ENCODE measurements at regions of chr4 and their contacts with region 1.

Region 1: DNA sequence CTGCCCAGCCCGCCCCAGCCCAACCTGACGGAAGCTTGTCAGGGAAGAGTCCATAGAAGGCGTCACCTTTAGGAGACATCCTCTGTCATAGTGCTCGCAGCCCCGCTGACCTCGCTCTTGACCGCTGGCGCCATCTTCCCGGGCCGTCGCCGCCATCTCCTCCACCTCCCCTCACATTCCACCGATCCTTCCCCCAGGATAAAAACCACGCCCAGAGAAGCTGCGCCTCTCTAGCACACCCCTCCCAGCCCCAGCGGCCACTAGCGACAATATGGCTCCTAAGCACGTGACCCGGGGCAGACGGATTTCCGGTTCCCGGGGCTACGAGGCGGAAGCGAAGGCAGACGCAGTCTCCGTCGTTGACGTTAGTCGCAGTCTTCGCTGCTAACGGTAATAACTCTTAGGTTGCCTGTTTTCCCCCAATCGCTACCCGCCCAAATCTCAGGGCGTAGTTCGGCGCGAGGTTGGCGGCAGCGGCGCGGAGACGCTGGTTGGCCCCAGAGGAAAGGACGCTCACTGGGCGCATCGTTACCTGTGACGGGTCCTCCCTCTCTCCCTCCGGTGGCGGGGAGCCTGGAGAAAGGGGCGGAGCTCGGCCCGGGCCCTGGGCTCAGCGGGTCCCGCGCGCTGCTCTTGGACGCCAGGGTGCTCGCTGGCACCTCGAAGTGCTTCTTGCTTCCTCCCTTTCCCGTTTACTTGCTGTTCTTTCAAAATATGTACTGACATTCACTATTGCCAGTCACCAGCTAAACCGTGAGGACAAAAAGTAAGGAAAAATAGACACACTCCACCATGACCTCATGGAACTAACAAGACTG is at the starts of genes RCHY1 and THAP6:
- DNase-seq: peak; percentile 82 to 95 (median 93)
- ATAC-seq: peak; percentile 92
- H3K4me3 ChIP-seq: peak within 1 kb of the TSS; percentile 79
- H3K4me3 Mint-ChIP-seq: peak within 1 kb of the TSS in 1 of 10 donors; percentile 97
- H3K27ac ChIP-seq: peak within 1 kb of the TSS; percentile 98
- H3K27ac Mint-ChIP-seq: peak within 1 kb of the TSS in 7 of 9 donors; percentile 96 to 100 (median 98)
- H3K4me1 ChIP-seq: peaks cover 53 to 56% of the 10 kb centered on the region in 2 donors
- H3K4me1 Mint-ChIP-seq: peaks cover 30 to 63% (median 49%) of the 10 kb centered on the region in 7 donors
- H3K27me3 ChIP-seq: no peaks in the 10 kb centered on the region
- H3K27me3 Mint-ChIP-seq: no peaks in the 10 kb centered on the region
- total RNA-seq, gene RCHY1: 23.0 to 37.8 (median 29.6) TPM
- total RNA-seq, gene THAP6: 18.2 to 43.9 (median 25.1) TPM

Region 2: DNA sequence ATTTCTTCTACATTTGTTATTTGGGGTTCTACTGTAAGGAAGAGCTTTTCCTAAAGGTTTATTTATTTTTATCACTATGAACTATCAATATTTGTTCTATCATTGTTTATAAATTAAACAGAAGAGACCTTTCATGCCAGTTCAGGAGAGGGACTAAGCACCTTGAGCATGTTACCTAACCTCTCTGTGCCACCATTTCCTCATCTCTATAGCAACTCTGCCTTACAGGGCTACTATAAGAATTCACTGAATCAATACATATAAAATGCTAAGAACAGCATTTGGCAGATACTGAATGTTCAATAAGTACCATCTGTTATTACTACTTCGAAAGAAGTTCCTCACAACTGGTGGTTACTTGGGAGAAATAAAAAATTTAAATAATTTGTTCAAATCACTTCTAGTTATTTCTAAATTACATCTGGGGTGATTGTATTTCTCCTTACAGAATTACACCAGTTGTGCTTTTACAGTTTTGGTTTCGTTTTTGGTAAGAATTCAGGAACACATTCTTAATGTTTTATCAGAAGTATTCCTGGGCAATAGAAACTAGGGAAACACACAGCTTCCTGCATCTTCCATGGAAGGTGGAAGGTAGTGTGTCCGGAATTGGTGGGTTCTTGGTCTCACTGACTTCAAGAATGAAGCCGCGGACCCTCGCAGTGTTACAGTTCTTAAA is 1116.5 kb before region 1 on chr4:
- CTCF ChIA-PET with region 1: no interaction called
- POLR2A ChIA-PET with region 1: interaction called, 5 read pairs
- intact Hi-C with region 1: loop called in 1 of 2 experiments (anchors 1 kb)
- DNase-seq: peak in 4 of 9 donors; percentile 10 to 58 (median 38)
- ATAC-seq: peak; percentile 78
- H3K4me3 ChIP-seq: peak overlapping the region; percentile 76
- H3K4me3 Mint-ChIP-seq: peak overlapping the region; percentile 89 to 99 (median 96)
- H3K27ac ChIP-seq: peak overlapping the region; percentile 83
- H3K27ac Mint-ChIP-seq: peak overlapping the region; percentile 92 to 99 (median 97)
- H3K4me1 ChIP-seq: no peaks in the 10 kb centered on the region
- H3K4me1 Mint-ChIP-seq: peaks cover 0 to 19% (median 11%) of the 10 kb centered on the region in 7 donors
- H3K27me3 ChIP-seq: no peaks in the 10 kb centered on the region
- H3K27me3 Mint-ChIP-seq: peaks cover 0 to 5% (median 0%) of the 10 kb centered on the region in 5 donors

Region 3: GRCh38 chr4:75630174-75630936 is 116.0 kb after region 1 on chr4 and contains the start of gene CDKL2:
- CTCF ChIA-PET with region 1: no interaction called
- POLR2A ChIA-PET with region 1: no interaction called
- intact Hi-C with region 1: loop called (anchors 1 to 2 kb)
- DNase-seq: peak; percentile 85 to 93 (median 91)
- ATAC-seq: peak; percentile 100
- H3K4me3 ChIP-seq: peak within 1 kb of the TSS; percentile 74
- H3K4me3 Mint-ChIP-seq: peak within 1 kb of the TSS; percentile 88 to 97 (median 94)
- H3K27ac ChIP-seq: peak within 1 kb of the TSS; percentile 73
- H3K27ac Mint-ChIP-seq: peak within 1 kb of the TSS; percentile 66 to 94 (median 86)
- H3K4me1 ChIP-seq: peaks cover 0 to 7% of the 10 kb centered on the region in 2 donors
- H3K4me1 Mint-ChIP-seq: peaks cover 6 to 18% (median 11%) of the 10 kb centered on the region in 7 donors
- H3K27me3 ChIP-seq: no peaks in the 10 kb centered on the region
- H3K27me3 Mint-ChIP-seq: peaks cover 0 to 12% (median 0%) of the 10 kb centered on the region in 5 donors
- total RNA-seq, gene CDKL2: 0.22 to 1.2 (median 0.34) TPM

Region 4: DNA sequence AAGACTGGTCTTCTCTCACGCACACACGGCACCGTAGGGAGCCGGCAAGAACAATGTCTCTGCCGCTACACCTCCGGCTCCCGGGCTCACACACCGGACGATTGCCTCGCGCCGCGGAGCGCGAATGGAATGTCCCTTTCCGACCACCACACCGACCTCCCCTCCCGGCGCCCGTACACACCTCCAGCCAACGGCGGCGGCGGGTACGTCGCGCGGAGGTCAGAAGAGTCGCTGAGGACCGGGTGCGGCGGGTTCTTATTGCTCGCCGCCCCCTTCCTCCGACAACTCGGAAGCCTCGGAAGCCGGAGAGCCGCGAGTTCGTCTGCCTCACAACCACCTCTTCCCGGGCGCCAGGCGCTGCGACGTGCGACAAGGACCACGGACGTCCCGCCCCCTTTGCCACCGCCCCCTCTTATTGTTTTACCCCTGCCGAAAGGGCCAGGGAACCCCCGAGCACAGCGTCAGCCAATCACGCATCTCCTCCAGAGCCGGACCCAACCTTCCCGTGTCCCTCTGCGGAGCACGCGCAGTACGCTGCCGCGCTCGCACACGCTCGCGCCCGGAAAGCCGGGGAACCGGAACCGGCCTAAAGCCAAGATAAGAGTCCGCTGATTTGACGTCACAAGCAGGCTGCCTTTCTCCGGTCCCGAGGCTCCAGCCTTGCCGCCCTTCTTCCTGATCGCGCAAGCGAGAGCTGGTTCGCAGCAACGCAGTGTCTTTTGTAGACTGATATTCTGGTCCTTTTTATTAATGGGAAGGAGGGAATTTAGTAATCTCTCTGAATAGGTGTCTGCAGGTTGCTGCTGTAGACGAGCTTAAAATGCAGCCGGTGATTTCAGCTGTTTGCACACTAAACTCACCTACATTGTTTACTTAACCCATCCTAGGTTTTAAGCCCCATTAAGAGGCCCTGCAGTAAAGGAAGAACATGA is 159.0 kb after region 1 on chr4 and contains the start of gene G3BP2:
- CTCF ChIA-PET with region 1: no interaction called
- POLR2A ChIA-PET with region 1: interaction called, 17 read pairs
- intact Hi-C with region 1: loop called (anchors 1 kb)
- DNase-seq: peak; percentile 87 to 99 (median 97)
- ATAC-seq: peak; percentile 97
- H3K4me3 ChIP-seq: peak within 1 kb of the TSS; percentile 91
- H3K4me3 Mint-ChIP-seq: peak within 1 kb of the TSS; percentile 96 to 100 (median 98)
- H3K27ac ChIP-seq: peak within 1 kb of the TSS; percentile 96
- H3K27ac Mint-ChIP-seq: peak within 1 kb of the TSS; percentile 92 to 100 (median 99)
- H3K4me1 ChIP-seq: peaks cover 38 to 43% of the 10 kb centered on the region in 2 donors
- H3K4me1 Mint-ChIP-seq: peaks cover 36 to 47% (median 44%) of the 10 kb centered on the region in 7 donors
- H3K27me3 ChIP-seq: no peaks in the 10 kb centered on the region
- H3K27me3 Mint-ChIP-seq: no peaks in the 10 kb centered on the region
- total RNA-seq, gene G3BP2: 161 to 299 (median 167) TPM

Region 5: GRCh38 chr4:76148142-76148865 is 634.0 kb after region 1 on chr4 and contains the start of gene NUP54:
- CTCF ChIA-PET with region 1: no interaction called
- POLR2A ChIA-PET with region 1: interaction called, 8 read pairs
- intact Hi-C with region 1: loop called (anchors 1 kb)
- DNase-seq: peak; percentile 85 to 96 (median 92)
- ATAC-seq: peak; percentile 99
- H3K4me3 ChIP-seq: peak within 1 kb of the TSS; percentile 85
- H3K4me3 Mint-ChIP-seq: peak within 1 kb of the TSS; percentile 90 to 100 (median 96)
- H3K27ac ChIP-seq: peak within 1 kb of the TSS; percentile 93
- H3K27ac Mint-ChIP-seq: peak within 1 kb of the TSS; percentile 91 to 99 (median 94)
- H3K4me1 ChIP-seq: peaks cover 12% of the 10 kb centered on the region in 2 donors
- H3K4me1 Mint-ChIP-seq: peaks cover 21 to 52% (median 45%) of the 10 kb centered on the region in 7 donors
- H3K27me3 ChIP-seq: no peaks in the 10 kb centered on the region
- H3K27me3 Mint-ChIP-seq: no peaks in the 10 kb centered on the region
- total RNA-seq, gene NUP54: 51.1 to 82.0 (median 65.5) TPM